ENCODE measurements at regions of chr1 and their contacts with region 1.

Region 1: DNA sequence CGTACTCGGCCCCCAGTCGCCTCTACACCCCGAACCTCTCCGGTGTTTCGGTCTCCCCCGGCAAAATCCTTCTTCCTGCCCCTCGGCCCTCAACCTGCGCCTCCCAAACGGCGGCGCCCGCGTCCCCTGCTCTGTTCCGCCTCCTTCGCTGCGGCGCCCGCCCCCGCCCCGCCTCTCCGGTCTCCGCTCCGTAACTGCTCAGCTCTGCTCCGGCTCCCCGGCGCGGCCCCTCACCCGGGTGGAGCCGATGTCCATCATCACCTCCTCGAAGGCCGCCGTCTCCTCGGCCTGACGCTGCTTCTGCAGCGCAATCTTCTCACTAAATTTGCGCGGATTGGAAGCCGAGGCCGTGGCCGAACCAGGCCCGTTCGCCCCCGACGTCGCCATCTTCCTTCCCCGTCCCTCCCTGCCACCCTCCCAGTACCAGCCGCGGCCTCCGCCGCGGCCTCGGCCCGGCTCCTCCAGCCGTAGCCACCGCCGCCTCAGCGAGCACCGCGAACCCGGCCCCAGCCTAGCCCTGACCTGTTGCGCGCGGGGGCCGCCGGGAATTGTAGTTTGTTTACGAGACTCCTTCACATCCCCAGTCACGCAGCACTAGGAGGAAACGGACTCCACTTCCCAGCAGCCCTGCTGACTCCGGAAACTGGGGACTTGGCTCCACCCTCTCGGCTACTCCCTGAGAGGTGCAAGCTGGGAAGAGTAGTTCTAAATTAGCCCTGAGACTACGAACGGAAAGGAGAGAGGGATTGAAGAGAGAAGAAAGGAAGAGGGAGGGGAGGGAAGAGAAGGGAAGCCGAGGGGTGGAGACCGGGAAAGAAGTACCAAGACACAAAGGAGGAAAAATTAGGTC is at the start of gene CRTC2:
- DNase-seq: peak; percentile 99
- ATAC-seq: peak; percentile 79
- H3K4me3 ChIP-seq: peak within 1 kb of the TSS; percentile 97
- H3K27ac ChIP-seq: peak within 1 kb of the TSS; percentile 36
- H3K4me1 ChIP-seq: peaks cover 41% of the 10 kb centered on the region
- H3K27me3 ChIP-seq: no peaks in the 10 kb centered on the region
- CTCF ChIP-seq: peak; percentile 31; the same call in 1 of the 2 replicates
- total RNA-seq, gene CRTC2: 17.6 and 21.0 TPM in 2 replicates

Region 2: DNA sequence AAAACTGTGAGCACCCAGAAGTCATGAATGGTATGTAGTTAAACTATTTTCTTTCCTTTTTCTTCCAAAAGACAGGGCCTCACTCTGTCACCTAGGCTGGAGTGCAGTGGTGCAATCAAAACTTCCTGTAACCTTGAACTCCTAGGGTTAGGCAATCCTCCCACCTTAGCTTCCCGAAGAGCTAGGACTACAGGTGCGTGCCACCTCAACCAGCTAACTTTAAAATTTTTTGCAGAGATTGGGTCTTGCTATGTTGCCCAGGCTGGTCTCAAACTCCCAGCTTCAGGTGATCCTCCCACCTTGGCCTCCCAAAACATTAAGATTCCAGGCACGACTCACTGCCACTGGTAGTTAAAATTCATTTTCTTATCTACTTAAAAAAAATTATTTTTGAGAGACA is 98.1 kb before region 1 on chr1:
- CTCF ChIA-PET with region 1: no interaction called
- POLR2A ChIA-PET with region 1: no interaction called
- intact Hi-C with region 1: no loop called
- DNase-seq: no peak
- ATAC-seq: no peak
- H3K4me3 ChIP-seq: no peak overlapping the region
- H3K27ac ChIP-seq: no peak overlapping the region
- H3K4me1 ChIP-seq: no peaks in the 10 kb centered on the region
- H3K27me3 ChIP-seq: no peaks in the 10 kb centered on the region
- CTCF ChIP-seq: no peak

Region 3: GRCh38 chr1:153903841-153904455 is 54.4 kb before region 1 on chr1:
- CTCF ChIA-PET with region 1: no interaction called
- POLR2A ChIA-PET with region 1: interaction called, 11 read pairs
- intact Hi-C with region 1: no loop called
- DNase-seq: no peak
- ATAC-seq: no peak
- H3K4me3 ChIP-seq: no peak overlapping the region
- H3K27ac ChIP-seq: no peak overlapping the region
- H3K4me1 ChIP-seq: no peaks in the 10 kb centered on the region
- H3K27me3 ChIP-seq: no peaks in the 10 kb centered on the region
- CTCF ChIP-seq: no peak

Region 4: DNA sequence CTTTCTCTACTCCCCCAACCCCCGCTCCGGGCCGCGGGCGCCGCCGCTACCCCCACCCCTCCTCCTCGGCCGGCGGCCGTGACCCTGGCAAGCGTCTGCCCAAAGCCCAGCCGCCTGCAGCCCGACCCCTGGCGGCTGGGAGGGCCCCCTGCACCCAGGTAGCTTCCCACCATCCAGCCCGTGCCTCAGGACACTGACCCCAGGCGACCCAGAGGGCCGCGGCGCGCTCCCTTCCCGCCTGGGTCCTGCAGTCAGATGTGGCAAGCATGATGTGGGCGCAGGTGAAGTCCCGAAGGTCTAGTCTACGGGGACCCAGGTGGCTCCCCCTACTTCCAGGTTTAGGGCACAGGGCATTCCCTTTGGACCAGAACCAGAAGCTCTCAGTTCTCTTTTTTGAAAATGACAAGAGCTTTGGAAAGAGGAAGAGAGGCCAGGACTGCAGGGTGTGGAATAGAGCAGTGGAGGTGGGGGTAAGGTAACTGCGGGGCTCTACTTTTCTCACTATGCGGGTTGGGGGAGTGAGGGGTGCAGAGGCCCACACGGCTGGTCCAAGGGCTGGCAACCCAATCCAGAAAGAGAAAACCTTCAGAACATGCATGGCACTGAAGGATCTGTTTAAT is 11.6 kb before region 1 on chr1 and contains the start of gene DENND4B:
- CTCF ChIA-PET with region 1: interaction called, 5 read pairs
- POLR2A ChIA-PET with region 1: no interaction called
- intact Hi-C with region 1: loop called (anchors 1 kb)
- DNase-seq: peak; percentile 86
- ATAC-seq: peak; percentile 88
- H3K4me3 ChIP-seq: peak within 1 kb of the TSS; percentile 81
- H3K27ac ChIP-seq: peak within 1 kb of the TSS; percentile 43
- H3K4me1 ChIP-seq: peaks cover 13% of the 10 kb centered on the region
- H3K27me3 ChIP-seq: no peaks in the 10 kb centered on the region
- CTCF ChIP-seq: peak; percentile 90
- total RNA-seq, gene DENND4B: 27.3 and 38.0 TPM in 2 replicates

Region 5: GRCh38 chr1:153977250-153978240 is 19.2 kb after region 1 on chr1 and contains the start of gene JTB:
- CTCF ChIA-PET with region 1: no interaction called
- POLR2A ChIA-PET with region 1: interaction called, 4 read pairs
- intact Hi-C with region 1: loop called (anchors 1 kb)
- DNase-seq: peak; percentile 89
- ATAC-seq: peak; percentile 91
- H3K4me3 ChIP-seq: peak within 1 kb of the TSS; percentile 79
- H3K27ac ChIP-seq: peak within 1 kb of the TSS; percentile 8
- H3K4me1 ChIP-seq: peaks cover 18% of the 10 kb centered on the region
- H3K27me3 ChIP-seq: no peaks in the 10 kb centered on the region
- CTCF ChIP-seq: no peak
- total RNA-seq, gene JTB: 377 and 388 TPM in 2 replicates

Measured in PC-3 (cell line).